CD4-positive, alpha-beta memory T cell (primary cell): ENCODE measurements at regions of chr5 and their contacts with region 1.

Region 1: GRCh38 chr5:74919487-74919886 is 53.3 kb upstream of the FAM169A start:
- DNase-seq: peak in 4 of 5 donors; percentile 19 to 48 (median 23)
- H3K4me3 ChIP-seq: no peak overlapping the region
- H3K4me3 Mint-ChIP-seq: peak overlapping the region in 1 of 8 donors; percentile 15
- H3K27ac ChIP-seq: no peak overlapping the region
- H3K27ac Mint-ChIP-seq: no peak overlapping the region
- H3K4me1 ChIP-seq: no peaks in the 10 kb centered on the region
- H3K4me1 Mint-ChIP-seq: no peaks in the 10 kb centered on the region
- H3K27me3 ChIP-seq: no peaks in the 10 kb centered on the region
- H3K27me3 Mint-ChIP-seq: peaks cover 0 to 5% of the 10 kb centered on the region in 2 donors

Region 2: DNA sequence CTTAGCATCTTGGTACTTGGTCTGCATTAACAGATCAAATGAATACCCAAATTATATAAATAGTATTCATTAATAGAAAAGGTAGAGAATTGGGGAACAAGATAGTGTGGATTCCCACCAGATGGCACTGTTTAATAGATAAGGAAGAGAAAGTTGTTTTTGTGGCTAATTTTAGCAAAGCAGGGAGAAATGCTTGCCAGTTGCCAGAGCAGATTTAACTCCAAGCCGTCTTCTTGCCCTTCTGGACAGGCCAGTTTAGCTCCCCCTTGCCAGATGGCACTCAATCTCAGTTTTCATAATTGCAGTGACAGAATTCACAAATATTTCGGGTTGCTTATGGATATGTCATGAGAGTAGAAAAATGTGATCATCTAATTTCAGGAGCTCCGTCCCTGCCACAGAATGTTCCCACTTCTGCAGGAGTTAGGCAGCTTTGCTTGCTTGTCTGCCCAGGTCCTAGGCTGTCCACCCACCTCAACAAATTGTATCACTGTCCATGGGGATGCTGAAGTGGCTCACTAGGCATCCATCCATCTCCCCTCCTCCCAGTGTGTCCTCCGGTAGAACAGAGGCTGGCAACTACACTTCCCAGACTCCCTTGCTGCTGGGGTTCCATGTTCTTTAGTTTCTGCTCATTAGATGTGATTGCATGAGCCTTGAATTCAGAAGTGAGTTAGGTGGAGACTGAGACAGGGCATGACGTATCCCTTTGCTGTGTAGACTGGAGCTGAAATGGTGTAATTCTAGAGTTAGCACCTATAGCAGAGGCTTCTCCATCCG is 246.3 kb before region 1 on chr5:
- CTCF ChIA-PET with region 1: interaction called, 10 read pairs
- POLR2A ChIA-PET with region 1: no interaction called
- intact Hi-C with region 1: no loop called
- DNase-seq: peak in 2 of 5 donors; percentile 18 to 26
- H3K4me3 ChIP-seq: no peak overlapping the region
- H3K4me3 Mint-ChIP-seq: no peak overlapping the region
- H3K27ac ChIP-seq: no peak overlapping the region
- H3K27ac Mint-ChIP-seq: peak overlapping the region in 1 of 7 donors; percentile 22
- H3K4me1 ChIP-seq: no peaks in the 10 kb centered on the region
- H3K4me1 Mint-ChIP-seq: no peaks in the 10 kb centered on the region
- H3K27me3 ChIP-seq: no peaks in the 10 kb centered on the region
- H3K27me3 Mint-ChIP-seq: peaks cover 7 to 14% of the 10 kb centered on the region in 2 donors